ENCODE measurements at regions of chr4 and their contacts with region 1.

Region 1: GRCh38 chr4:74189331-74190043 is 31.6 kb downstream of the MTHFD2L start:
- H3K4me3 ChIP-seq: no peak overlapping the region
- H3K27ac ChIP-seq: no peak overlapping the region
- H3K4me1 ChIP-seq: no peaks in the 10 kb centered on the region
- CTCF ChIP-seq: no peak

Region 2: GRCh38 chr4:74152836-74153235 is 36.7 kb before region 1 on chr4:
- CTCF ChIA-PET with region 1: no interaction called
- POLR2A ChIA-PET with region 1: no interaction called
- H3K4me3 ChIP-seq: no peak overlapping the region
- H3K27ac ChIP-seq: no peak overlapping the region
- H3K4me1 ChIP-seq: no peaks in the 10 kb centered on the region
- CTCF ChIP-seq: no peak

Region 3: DNA sequence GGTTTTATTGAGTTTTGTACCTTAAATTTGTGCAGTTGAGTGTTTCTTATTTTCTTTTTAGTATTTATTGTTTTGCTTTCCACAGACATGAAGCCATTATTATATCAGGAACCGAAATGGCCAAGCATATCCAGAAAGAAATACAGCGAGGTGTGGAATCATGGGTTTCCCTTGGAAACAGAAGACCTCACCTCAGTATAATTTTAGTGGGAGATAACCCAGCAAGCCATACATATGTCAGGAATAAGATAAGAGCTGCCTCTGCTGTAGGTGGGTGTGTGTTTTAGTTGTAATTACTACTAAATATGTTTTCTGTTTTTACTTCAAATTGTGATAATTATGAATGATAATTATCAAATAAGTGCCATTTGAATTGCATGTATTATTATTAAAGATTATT is 15.1 kb before region 1 on chr4:
- CTCF ChIA-PET with region 1: interaction called, 13 read pairs
- POLR2A ChIA-PET with region 1: no interaction called
- H3K4me3 ChIP-seq: no peak overlapping the region
- H3K27ac ChIP-seq: no peak overlapping the region
- H3K4me1 ChIP-seq: no peaks in the 10 kb centered on the region
- CTCF ChIP-seq: no peak

Region 4: GRCh38 chr4:74202062-74202586 is 12.6 kb after region 1 on chr4:
- CTCF ChIA-PET with region 1: interaction called, 13 read pairs
- POLR2A ChIA-PET with region 1: no interaction called
- H3K4me3 ChIP-seq: no peak overlapping the region
- H3K27ac ChIP-seq: peak overlapping the region; percentile 43; the same call in 1 of the 2 replicates
- H3K4me1 ChIP-seq: peaks cover 7% of the 10 kb centered on the region
- CTCF ChIP-seq: no peak

Region 5: GRCh38 chr4:74228691-74229640 is 39.5 kb after region 1 on chr4:
- CTCF ChIA-PET with region 1: interaction called, 19 read pairs
- POLR2A ChIA-PET with region 1: no interaction called
- H3K4me3 ChIP-seq: no peak overlapping the region
- H3K27ac ChIP-seq: no peak overlapping the region
- H3K4me1 ChIP-seq: no peaks in the 10 kb centered on the region
- CTCF ChIP-seq: no peak

Region 6: GRCh38 chr4:74311696-74312313 is 122.3 kb after region 1 on chr4:
- CTCF ChIA-PET with region 1: interaction called, 14 read pairs
- POLR2A ChIA-PET with region 1: no interaction called
- H3K4me3 ChIP-seq: no peak overlapping the region
- H3K27ac ChIP-seq: no peak overlapping the region
- H3K4me1 ChIP-seq: no peaks in the 10 kb centered on the region
- CTCF ChIP-seq: 0 out of 2 replicates have a peak, but pooled peaks have one; percentile 19

Region 7: DNA sequence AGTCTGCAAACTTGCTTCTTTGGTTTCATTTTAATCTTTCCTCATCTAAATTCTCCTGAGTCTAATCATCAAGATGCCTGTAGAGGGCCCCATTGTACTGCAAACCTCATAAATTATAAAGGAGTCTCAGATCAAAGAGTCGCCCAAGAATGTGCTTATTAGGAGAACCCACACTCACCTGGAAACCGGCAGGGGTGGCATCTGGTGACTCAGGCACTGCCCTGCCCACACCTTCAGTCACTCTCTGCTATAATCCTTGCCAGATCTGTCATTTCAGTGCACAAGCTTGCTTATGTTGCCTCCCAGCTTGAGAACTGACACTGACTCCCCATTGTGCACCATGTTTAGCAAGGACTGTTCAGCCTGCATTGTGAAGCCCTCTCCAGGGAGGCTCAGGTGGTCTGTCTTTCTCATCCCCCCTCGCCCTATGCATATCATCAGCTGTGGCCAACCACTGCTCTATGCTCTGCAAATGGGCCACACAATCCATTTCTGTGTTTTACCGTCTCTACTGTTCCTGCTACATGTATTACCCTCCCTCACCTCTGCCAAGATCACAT is 131.2 kb after region 1 on chr4:
- CTCF ChIA-PET with region 1: interaction called, 14 read pairs
- POLR2A ChIA-PET with region 1: no interaction called
- H3K4me3 ChIP-seq: no peak overlapping the region
- H3K27ac ChIP-seq: no peak overlapping the region
- H3K4me1 ChIP-seq: no peaks in the 10 kb centered on the region
- CTCF ChIP-seq: no peak

Region 8: DNA sequence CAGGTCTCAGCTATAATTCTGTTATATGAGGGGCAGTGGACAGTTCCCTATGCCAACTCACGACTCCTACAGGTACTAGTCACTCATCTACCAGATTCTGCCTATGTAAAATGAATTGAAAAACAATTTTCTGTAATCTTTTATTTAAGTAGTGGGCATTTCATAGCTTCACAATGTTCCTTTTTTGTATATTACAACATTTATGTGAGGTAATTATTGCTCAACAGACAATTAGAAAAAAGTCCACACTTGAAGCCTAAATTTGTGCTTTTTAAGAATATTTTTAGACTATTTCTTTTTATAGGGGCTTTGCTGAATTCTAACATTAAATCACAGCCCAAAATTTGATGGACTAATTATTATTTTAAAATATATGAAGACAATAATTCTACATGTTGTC is 195.9 kb after region 1 on chr4:
- CTCF ChIA-PET with region 1: no interaction called
- POLR2A ChIA-PET with region 1: no interaction called
- H3K4me3 ChIP-seq: no peak overlapping the region
- H3K27ac ChIP-seq: no peak overlapping the region
- H3K4me1 ChIP-seq: no peaks in the 10 kb centered on the region
- CTCF ChIP-seq: no peak

Measured in HEK293 (cell line).